CD8-positive, alpha-beta memory T cell (primary cell): ENCODE measurements at regions of chr12 and their contacts with region 1.

Region 1: GRCh38 chr12:45324391-45324790 is 108.5 kb downstream of the ANO6 start:
- DNase-seq: no peak
- H3K4me3 ChIP-seq: no peak overlapping the region
- H3K4me3 Mint-ChIP-seq: no peak overlapping the region
- H3K27ac ChIP-seq: no peak overlapping the region
- H3K27ac Mint-ChIP-seq: no peak overlapping the region
- H3K4me1 ChIP-seq: no peaks in the 10 kb centered on the region
- H3K4me1 Mint-ChIP-seq: peaks cover 11 to 17% (median 16%) of the 10 kb centered on the region in 3 donors
- H3K27me3 ChIP-seq: no peaks in the 10 kb centered on the region
- H3K27me3 Mint-ChIP-seq: no peaks in the 10 kb centered on the region

Region 2: DNA sequence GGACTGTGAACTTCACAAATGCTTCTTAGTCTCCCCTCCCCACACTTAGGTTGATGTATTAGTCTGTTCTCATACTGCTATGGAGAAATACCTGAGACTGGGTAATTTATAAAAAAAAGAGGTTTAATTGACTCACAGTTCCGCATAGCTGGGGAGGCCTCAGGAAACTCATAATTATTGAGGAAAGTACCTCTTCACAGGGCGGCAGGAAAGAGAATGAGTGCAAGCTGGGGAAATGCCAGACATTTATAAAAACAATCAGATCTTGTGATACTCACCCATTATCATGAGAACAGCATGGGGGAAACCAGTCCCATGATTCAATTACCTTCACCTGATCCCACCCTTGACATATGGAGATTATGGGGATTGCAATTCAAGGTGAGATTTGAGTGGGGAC is 1322.6 kb after region 1 on chr12:
- CTCF ChIA-PET with region 1: no interaction called
- POLR2A ChIA-PET with region 1: interaction called, 11 read pairs
- DNase-seq: no peak
- H3K4me3 ChIP-seq: no peak overlapping the region
- H3K4me3 Mint-ChIP-seq: no peak overlapping the region
- H3K27ac ChIP-seq: no peak overlapping the region
- H3K27ac Mint-ChIP-seq: no peak overlapping the region
- H3K4me1 ChIP-seq: no peaks in the 10 kb centered on the region
- H3K4me1 Mint-ChIP-seq: no peaks in the 10 kb centered on the region
- H3K27me3 ChIP-seq: no peaks in the 10 kb centered on the region
- H3K27me3 Mint-ChIP-seq: peaks cover 3 to 7% of the 10 kb centered on the region in 2 donors